ENCODE measurements at regions of chr22 and their contacts with region 1.

Region 1: GRCh38 chr22:39661842-39662676 is 91.5 kb downstream of the CACNA1I start:
- DNase-seq: peak; percentile 67 to 88 (median 84)
- ATAC-seq: peak; percentile 86
- H3K4me3 ChIP-seq: peak overlapping the region; percentile 30 to 61
- H3K4me3 Mint-ChIP-seq: peak overlapping the region; percentile 81
- H3K27ac ChIP-seq: peak overlapping the region in 1 of 2 experiments; percentile 48
- H3K27ac Mint-ChIP-seq: peak overlapping the region; percentile 69
- H3K4me1 ChIP-seq: peaks cover 56% of the 10 kb centered on the region
- H3K4me1 Mint-ChIP-seq: peaks cover 62% of the 10 kb centered on the region
- H3K27me3 ChIP-seq: peaks cover 0 to 7% of the 10 kb centered on the region in 2 experiments
- H3K27me3 Mint-ChIP-seq: peaks cover 13% of the 10 kb centered on the region
- CTCF ChIP-seq: no peak

Region 2: GRCh38 chr22:39360674-39361413 is 301.2 kb before region 1 on chr22:
- CTCF ChIA-PET with region 1: no interaction called
- POLR2A ChIA-PET with region 1: no interaction called
- intact Hi-C with region 1: no loop called
- DNase-seq: no peak
- ATAC-seq: no peak
- H3K4me3 ChIP-seq: no peak overlapping the region
- H3K4me3 Mint-ChIP-seq: no peak overlapping the region
- H3K27ac ChIP-seq: no peak overlapping the region
- H3K27ac Mint-ChIP-seq: no peak overlapping the region
- H3K4me1 ChIP-seq: no peaks in the 10 kb centered on the region
- H3K4me1 Mint-ChIP-seq: no peaks in the 10 kb centered on the region
- H3K27me3 ChIP-seq: no peaks in the 10 kb centered on the region
- H3K27me3 Mint-ChIP-seq: no peaks in the 10 kb centered on the region
- CTCF ChIP-seq: no peak

Region 3: DNA sequence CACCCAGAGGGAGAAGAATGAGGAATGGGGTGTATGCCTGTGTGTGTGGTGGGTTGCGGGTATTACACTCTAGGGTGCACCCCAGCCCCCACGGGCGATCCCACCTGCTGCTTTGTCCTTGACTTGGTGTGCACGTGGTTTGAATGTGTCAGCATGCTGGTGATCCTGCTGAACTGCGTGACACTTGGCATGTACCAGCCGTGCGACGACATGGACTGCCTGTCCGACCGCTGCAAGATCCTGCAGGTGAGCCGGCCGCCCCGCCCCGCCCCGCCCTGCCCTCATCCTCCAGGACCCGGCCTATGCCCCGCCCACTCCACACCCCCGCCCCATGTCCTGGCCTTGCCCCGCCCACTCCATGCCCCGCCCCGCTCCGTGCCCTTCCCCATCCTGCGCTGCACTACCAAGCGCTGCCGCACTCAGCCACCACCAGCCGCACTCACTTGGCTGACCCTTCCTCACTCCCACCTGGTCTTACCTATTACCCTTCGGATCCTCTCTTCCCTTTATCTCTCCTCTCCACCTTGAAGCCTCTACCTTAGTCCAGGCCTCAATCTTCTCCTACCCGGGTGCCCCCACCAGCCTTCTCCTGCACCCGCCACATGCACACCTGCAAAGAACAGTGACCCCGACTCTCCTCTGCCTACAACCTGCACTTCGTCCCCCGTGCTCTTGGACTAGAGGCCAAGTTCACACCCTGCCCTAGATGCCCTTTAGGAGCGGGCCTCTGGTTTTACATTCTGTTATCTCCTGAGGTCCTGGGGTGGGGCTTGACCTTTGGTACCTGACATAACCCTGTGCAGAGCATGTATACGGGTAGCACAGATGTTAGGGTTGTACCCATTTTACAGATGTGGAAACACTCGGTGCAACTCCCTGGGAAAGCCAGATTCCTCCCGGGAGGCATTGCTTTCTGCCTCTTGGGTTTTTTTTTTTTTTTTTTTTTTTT is 63.8 kb before region 1 on chr22:
- CTCF ChIA-PET with region 1: no interaction called
- POLR2A ChIA-PET with region 1: no interaction called
- intact Hi-C with region 1: loop called in 1 of 2 experiments (anchors 2 kb)
- DNase-seq: peak; percentile 30 to 77 (median 71)
- ATAC-seq: peak; percentile 90
- H3K4me3 ChIP-seq: peak overlapping the region in 1 of 2 experiments; percentile 15
- H3K4me3 Mint-ChIP-seq: peak overlapping the region; percentile 35
- H3K27ac ChIP-seq: no peak overlapping the region
- H3K27ac Mint-ChIP-seq: no peak overlapping the region
- H3K4me1 ChIP-seq: peaks cover 33% of the 10 kb centered on the region
- H3K4me1 Mint-ChIP-seq: peaks cover 31% of the 10 kb centered on the region
- H3K27me3 ChIP-seq: peaks cover 0 to 2% of the 10 kb centered on the region in 2 experiments
- H3K27me3 Mint-ChIP-seq: peaks cover 18% of the 10 kb centered on the region
- CTCF ChIP-seq: no peak

Region 4: GRCh38 chr22:39690881-39691605 is 29.0 kb after region 1 on chr22:
- CTCF ChIA-PET with region 1: no interaction called
- POLR2A ChIA-PET with region 1: no interaction called
- intact Hi-C with region 1: no loop called
- DNase-seq: peak in 1 of 9 experiments; percentile 11
- ATAC-seq: no peak
- H3K4me3 ChIP-seq: no peak overlapping the region
- H3K4me3 Mint-ChIP-seq: peak overlapping the region; percentile 26
- H3K27ac ChIP-seq: no peak overlapping the region
- H3K27ac Mint-ChIP-seq: no peak overlapping the region
- H3K4me1 ChIP-seq: no peaks in the 10 kb centered on the region
- H3K4me1 Mint-ChIP-seq: peaks cover 4% of the 10 kb centered on the region
- H3K27me3 ChIP-seq: peaks cover 0 to 7% of the 10 kb centered on the region in 2 experiments
- H3K27me3 Mint-ChIP-seq: peaks cover 42% of the 10 kb centered on the region
- CTCF ChIP-seq: no peak